ENCODE measurements at regions of chr16 and their contacts with region 1.

Region 1: DNA sequence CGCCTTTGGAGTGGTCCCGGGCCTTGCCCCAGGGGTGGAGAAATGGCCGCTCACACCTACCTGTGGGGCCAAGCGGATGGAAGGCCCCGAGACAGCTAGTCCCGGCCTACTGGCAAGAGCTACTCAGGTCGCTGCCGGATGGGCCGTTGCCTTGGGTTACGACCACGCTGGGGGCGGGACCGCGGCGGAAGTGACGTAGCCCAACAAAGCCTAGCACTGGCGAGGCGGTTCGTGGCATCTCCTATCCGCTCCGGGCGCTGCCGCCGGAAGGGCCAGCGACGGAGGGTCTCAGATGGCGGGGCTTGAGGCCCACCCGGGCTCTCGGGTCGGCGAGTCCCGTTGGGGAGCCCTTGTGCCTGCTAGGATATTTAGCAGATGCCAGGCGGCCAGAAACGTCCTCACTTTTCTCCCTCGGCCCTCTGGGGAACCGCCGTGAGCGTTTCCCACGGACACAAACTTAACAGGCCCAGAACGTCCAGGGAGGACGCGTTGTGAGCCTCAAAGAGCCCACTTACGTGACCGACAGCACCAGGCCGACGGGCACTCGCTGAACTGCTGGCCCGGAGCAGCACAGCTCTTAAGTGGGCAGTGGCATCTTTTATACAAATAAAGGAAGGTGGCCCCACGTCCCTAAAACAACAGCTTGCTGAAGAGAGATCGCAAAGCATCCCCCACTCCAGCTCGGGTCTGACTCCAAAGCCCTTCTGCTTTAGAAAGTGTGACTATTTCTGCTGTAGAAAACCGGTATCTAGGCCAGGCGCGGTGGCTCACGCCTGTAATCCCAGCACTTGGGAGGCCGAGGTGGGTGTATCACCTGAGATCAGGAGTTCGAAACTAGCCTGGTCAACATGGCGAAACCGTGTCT is at the start of gene C16orf46:
- DNase-seq: peak; percentile 98 to 100 (median 99)
- H3K4me3 ChIP-seq: peak within 1 kb of the TSS; percentile 54 to 100 (median 85)
- H3K27ac ChIP-seq: peak within 1 kb of the TSS; percentile 65 to 99 (median 95)
- H3K27me3 ChIP-seq: no peaks in the 10 kb centered on the region
- CTCF ChIP-seq: peak in 26 of 56 donors; percentile 6 to 54 (median 21)
- total RNA-seq, gene C16orf46: 0.69 to 11.8 (median 6.2) TPM

Region 2: GRCh38 chr16:81006814-81007696 is 70.3 kb before region 1 on chr16 and contains the starts of genes CENPN and CMC2:
- intact Hi-C with region 1: loop called (anchors 2 kb)
- DNase-seq: peak; percentile 98 to 99 (median 99)
- H3K4me3 ChIP-seq: peak within 1 kb of the TSS; percentile 63 to 100 (median 97)
- H3K27ac ChIP-seq: peak within 1 kb of the TSS; percentile 94 to 100 (median 100)
- H3K27me3 ChIP-seq: no peaks in the 10 kb centered on the region
- CTCF ChIP-seq: peak in 27 of 56 donors; percentile 8 to 42 (median 28)
- total RNA-seq, gene CENPN: 2.4 to 13.8 (median 6.3) TPM
- total RNA-seq, gene CMC2: 53.6 to 107 (median 84.9) TPM

Region 3: DNA sequence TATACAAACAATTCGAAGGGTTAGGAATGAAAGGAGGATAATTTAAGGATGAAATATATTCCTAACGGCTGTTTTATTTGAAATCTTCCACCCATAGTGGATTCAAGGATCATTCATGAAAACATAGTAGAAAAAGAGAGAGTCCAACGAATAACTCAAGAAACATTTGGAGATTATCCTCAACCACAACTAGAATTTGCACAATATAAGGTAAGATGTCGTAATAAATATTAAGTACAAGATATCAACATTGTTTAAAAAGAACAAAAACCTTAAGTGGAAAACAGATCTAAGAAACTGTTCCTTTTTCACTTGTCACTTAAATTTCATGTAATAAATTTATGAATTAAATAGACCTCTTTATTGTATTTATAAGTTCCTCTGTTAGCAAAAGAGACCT is 50.9 kb before region 1 on chr16:
- intact Hi-C with region 1: no loop called
- DNase-seq: no peak
- H3K4me3 ChIP-seq: no peak overlapping the region
- H3K27ac ChIP-seq: no peak overlapping the region
- H3K27me3 ChIP-seq: no peaks in the 10 kb centered on the region
- CTCF ChIP-seq: no peak

Region 4: GRCh38 chr16:81151648-81152310 is 74.5 kb after region 1 on chr16:
- intact Hi-C with region 1: no loop called
- DNase-seq: no peak
- H3K4me3 ChIP-seq: peak overlapping the region in 2 of 59 donors; percentile 7 to 16
- H3K27ac ChIP-seq: peak overlapping the region in 11 of 59 donors; percentile 8 to 63 (median 38)
- H3K27me3 ChIP-seq: no peaks in the 10 kb centered on the region
- CTCF ChIP-seq: no peak

Region 5: DNA sequence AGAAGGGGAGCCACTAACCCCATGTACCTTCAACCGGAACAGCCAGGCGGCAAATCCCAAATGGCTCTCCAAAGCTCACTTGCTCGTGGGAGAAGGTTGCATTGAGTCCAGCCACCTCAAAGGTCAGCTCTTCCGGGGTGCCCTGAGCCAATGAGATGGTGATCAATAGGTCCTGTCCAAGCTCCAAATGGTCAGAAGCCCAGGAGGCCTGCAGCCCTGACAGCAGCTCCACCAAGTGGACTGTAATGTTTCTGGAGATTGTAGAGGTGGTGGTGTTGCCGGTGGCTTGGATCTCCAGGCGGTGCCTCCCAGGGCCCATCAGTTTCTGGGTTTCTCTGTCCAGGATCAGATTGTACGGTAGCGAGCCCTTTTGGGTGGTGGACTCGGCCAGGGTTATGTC is 121.3 kb after region 1 on chr16:
- intact Hi-C with region 1: loop called in 1 of 2 experiments (anchors 5 kb)
- DNase-seq: peak in 4 of 10 donors; percentile 28 to 54 (median 39)
- H3K4me3 ChIP-seq: peak overlapping the region in 17 of 59 donors; percentile 2 to 53 (median 29)
- H3K27ac ChIP-seq: peak overlapping the region in 12 of 59 donors; percentile 3 to 64 (median 30)
- H3K27me3 ChIP-seq: peaks cover 0 to 3% (median 0%) of the 10 kb centered on the region in 45 donors
- CTCF ChIP-seq: peak in 44 of 56 donors; percentile 11 to 65 (median 39)

Region 6: GRCh38 chr16:81314603-81315270 is 237.4 kb after region 1 on chr16 and contains the start of gene GAN:
- intact Hi-C with region 1: loop called in 1 of 2 experiments (anchors 10 kb)
- DNase-seq: peak; percentile 91 to 98 (median 96)
- H3K4me3 ChIP-seq: peak within 1 kb of the TSS; percentile 64 to 98 (median 88)
- H3K27ac ChIP-seq: peak within 1 kb of the TSS in 57 of 59 donors; percentile 9 to 91 (median 77)
- H3K27me3 ChIP-seq: no peaks in the 10 kb centered on the region
- CTCF ChIP-seq: peak in 36 of 56 donors; percentile 5 to 59 (median 23)
- total RNA-seq, gene GAN: 31.2 to 66.5 (median 46.5) TPM

Measured in dorsolateral prefrontal cortex (tissue), 120 donors.